Activated T-helper 2 cell treated with anti-CD3 and anti-CD28 coated beads, Interferon-gamma antibody, Interleukin-2, Interleukin-4, amounts not matched to agents 10 μg/mL and 5 μg/mL and 100 μg/mL, durations not matched to agents 14 hours and 24 hours and 36 hours (primary cell): ENCODE measurements at regions of chr6 and their contacts with region 1.

Region 1: GRCh38 chr6:105981002-105981887 is 104.9 kb upstream of the PRDM1 start:
- DNase-seq: peak; percentile 36
- H3K4me3 Mint-ChIP-seq: peak overlapping the region; percentile 74
- H3K27ac Mint-ChIP-seq: peak overlapping the region; percentile 85
- H3K4me1 Mint-ChIP-seq: peaks cover 56% of the 10 kb centered on the region
- H3K27me3 Mint-ChIP-seq: peaks cover 3% of the 10 kb centered on the region

Region 2: DNA sequence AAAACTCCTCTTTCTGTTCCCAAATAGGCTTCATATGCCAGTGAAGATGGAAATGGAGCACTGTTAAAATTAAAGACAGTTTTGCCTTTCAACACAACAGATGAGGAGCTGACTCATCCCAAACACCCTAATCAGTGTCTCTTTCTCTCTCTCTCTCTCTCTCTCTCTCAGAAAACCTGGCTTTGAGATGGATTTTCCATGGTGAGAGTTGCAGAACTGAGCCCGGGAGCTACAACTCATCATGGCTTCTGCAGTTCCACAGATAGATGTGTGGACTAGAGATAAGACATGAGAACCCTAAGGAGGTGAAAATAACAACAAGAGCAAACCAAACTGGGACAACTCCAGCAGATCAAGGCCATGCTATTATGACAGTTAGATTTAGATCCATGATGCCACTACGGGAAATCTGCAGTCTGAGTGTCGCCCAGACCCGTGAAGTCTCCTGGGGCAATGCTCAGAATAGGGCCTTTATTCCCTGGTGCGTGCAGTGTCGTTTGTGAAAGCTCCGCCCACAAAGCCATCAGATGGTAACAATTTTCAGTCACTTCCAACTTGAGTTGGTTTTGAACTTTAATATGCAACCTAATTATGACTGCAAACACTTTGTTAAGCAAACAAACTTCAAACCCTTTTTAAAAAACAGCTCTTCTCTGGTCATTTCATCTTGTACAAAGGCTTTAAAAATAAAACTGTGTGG is 240.1 kb before region 1 on chr6:
- intact Hi-C with region 1: loop called (anchors 5 kb)
- DNase-seq: no peak
- H3K4me3 Mint-ChIP-seq: no peak overlapping the region
- H3K27ac Mint-ChIP-seq: no peak overlapping the region
- H3K4me1 Mint-ChIP-seq: peaks cover 51% of the 10 kb centered on the region
- H3K27me3 Mint-ChIP-seq: no peaks in the 10 kb centered on the region

Region 3: GRCh38 chr6:106315765-106316374 is 334.6 kb after region 1 on chr6:
- intact Hi-C with region 1: no loop called
- DNase-seq: no peak
- H3K4me3 Mint-ChIP-seq: peak overlapping the region; percentile 9
- H3K27ac Mint-ChIP-seq: peak overlapping the region; percentile 42
- H3K4me1 Mint-ChIP-seq: peaks cover 54% of the 10 kb centered on the region
- H3K27me3 Mint-ChIP-seq: no peaks in the 10 kb centered on the region